Colonic mucosa (tissue), 4 donors: ENCODE measurements at regions of chr2 and their contacts with region 1.

Region 1: DNA sequence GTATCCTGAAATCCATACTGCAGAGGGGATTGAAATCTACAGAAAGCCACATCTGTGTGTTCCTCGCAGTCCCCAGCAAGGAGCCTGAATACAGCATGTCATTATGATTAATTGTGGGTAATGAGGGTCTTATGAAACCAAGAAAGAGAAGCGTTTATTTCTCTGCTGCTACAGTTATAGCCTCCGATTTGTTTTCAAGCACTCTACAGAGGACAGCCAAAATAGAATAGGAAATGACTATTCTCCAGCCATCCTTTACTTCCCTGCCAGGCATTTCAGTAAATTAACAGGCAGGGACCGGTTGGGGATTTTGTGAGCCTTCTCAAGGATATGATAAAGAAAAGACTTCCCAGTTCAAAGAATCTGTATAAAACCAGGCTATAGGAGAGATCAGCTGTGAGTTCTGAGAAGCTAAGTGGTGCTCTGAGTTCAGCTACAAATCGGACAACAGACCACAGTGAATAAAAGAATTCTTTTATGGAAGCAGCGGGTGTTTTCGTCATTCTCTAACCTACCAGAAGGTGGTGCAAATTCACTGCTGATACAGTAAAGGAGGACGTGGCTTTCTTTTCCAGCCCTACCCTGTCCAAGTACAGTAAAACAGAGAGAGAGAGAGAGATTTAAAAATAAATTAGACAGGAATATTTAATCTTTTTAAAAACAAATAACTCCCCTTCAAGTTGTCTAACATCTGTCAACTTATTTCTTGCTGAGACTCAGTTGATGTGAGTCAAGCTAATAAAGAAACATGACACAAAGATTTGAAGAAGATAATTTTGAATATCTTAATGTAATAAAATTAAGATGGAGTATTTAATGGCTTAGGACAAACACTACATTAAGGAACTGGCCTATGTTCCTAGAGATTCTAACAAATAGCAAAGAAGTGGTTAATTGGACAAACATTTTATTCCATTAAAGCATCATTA is 133.7 kb downstream of the INSIG2 start:
- DNase-seq: peak; percentile 46
- H3K4me3 ChIP-seq: no peak overlapping the region
- H3K27ac ChIP-seq: no peak overlapping the region
- H3K4me1 ChIP-seq: no peaks in the 10 kb centered on the region
- H3K27me3 ChIP-seq: peaks cover 56% of the 10 kb centered on the region
- CTCF ChIP-seq: peak; percentile 56

Region 2: GRCh38 chr2:118046634-118047210 is 175.2 kb before region 1 on chr2:
- intact Hi-C with region 1: loop called (anchors 10 kb)
- DNase-seq: no peak
- H3K4me3 ChIP-seq: no peak overlapping the region
- H3K27ac ChIP-seq: no peak overlapping the region
- H3K4me1 ChIP-seq: no peaks in the 10 kb centered on the region
- H3K27me3 ChIP-seq: no peaks in the 10 kb centered on the region
- CTCF ChIP-seq: peak; percentile 36

Region 3: GRCh38 chr2:118154176-118154575 is 67.8 kb before region 1 on chr2:
- intact Hi-C with region 1: no loop called
- DNase-seq: no peak
- H3K4me3 ChIP-seq: no peak overlapping the region
- H3K27ac ChIP-seq: no peak overlapping the region
- H3K4me1 ChIP-seq: no peaks in the 10 kb centered on the region
- H3K27me3 ChIP-seq: no peaks in the 10 kb centered on the region
- CTCF ChIP-seq: no peak

Region 4: GRCh38 chr2:118632921-118633320 is 411.0 kb after region 1 on chr2:
- intact Hi-C with region 1: no loop called
- DNase-seq: no peak
- H3K4me3 ChIP-seq: no peak overlapping the region
- H3K27ac ChIP-seq: no peak overlapping the region
- H3K4me1 ChIP-seq: no peaks in the 10 kb centered on the region
- H3K27me3 ChIP-seq: no peaks in the 10 kb centered on the region
- CTCF ChIP-seq: no peak

Region 5: DNA sequence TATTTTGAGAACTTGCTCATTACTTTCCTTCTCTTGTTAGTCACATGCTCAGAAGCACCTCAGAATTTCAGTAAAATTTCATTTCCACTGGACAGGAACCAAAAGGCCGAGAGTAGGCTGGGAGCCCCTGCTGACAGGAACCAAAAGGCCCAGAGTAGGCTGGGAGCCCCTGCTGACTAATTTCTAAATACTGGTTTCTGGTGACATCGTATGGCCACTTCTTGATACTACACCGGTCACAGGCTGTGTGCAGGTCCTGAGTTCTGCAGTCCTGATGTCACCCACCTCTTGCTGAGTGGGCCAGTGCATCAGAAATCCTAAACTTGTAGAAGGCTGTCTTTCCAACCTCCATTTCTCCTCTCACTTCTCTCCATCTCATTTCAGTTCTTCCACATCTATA is 643.2 kb after region 1 on chr2:
- intact Hi-C with region 1: loop called (anchors 2 kb)
- DNase-seq: no peak
- H3K4me3 ChIP-seq: no peak overlapping the region
- H3K27ac ChIP-seq: no peak overlapping the region
- H3K4me1 ChIP-seq: no peaks in the 10 kb centered on the region
- H3K27me3 ChIP-seq: peaks cover 4% of the 10 kb centered on the region
- CTCF ChIP-seq: peak; percentile 38

Region 6: GRCh38 chr2:119694845-119695521 is 1473.1 kb after region 1 on chr2:
- intact Hi-C with region 1: no loop called
- DNase-seq: no peak
- H3K4me3 ChIP-seq: no peak overlapping the region
- H3K27ac ChIP-seq: no peak overlapping the region
- H3K4me1 ChIP-seq: no peaks in the 10 kb centered on the region
- H3K27me3 ChIP-seq: no peaks in the 10 kb centered on the region
- CTCF ChIP-seq: no peak